Left ventricle myocardium superior (tissue), 1 donor: ENCODE measurements at regions of chr7 and their contacts with region 1.

Region 1: DNA sequence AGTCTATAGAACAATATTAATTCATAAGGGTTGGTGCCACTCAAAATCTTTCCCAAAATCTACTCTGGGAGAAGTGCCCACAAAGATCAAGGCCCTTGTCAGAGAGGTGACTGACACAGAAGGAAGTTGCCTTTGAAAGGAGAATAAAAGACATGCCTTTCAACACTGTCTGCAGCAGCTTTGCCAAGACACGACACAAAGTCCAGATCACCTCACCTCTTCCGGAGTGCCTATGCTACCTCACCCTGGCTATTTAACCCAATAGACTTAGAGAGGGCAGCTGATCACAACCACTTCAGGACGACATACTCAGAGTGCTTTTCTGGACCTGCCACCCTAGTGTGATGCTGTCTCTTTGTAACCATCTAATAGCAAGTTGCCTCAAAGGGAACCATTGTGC is 49.0 kb upstream of the YAE1 start:
- DNase-seq: no peak
- ATAC-seq: no peak

Region 2: GRCh38 chr7:38796626-38797501 is 720.4 kb before region 1 on chr7:
- intact Hi-C with region 1: loop called (anchors 5 kb)
- DNase-seq: no peak
- ATAC-seq: no peak